ENCODE measurements at regions of chr17 and their contacts with region 1.

Region 1: DNA sequence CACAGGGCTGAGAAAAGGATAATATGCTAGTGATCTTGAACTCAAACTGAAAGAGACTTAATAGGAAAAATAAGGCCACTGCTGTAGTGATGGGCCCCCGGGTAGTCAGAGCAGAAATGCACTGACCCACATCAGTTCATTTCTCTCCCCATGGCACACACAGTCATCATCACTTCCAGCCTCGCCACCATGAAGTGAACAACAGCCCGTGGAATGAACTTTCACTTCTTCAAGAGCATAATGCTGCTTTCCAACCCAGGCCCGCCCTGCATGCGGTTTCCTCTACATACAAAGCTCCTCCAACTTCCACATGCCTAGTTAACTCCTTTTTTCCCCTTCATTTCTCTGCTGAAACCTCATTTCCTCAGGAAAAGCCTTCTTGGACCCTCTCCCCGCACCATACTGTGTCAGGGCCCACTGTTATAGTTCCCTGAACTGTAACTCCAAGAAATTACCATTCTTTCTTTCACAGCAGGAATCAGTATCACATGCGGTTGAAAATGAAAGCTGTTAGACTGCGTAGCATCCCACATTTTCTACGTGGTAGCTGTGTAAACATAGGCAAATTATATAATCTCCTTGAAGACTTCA is 65.8 kb upstream of the SMIM36 start:
- DNase-seq: peak; percentile 80
- H3K4me3 Mint-ChIP-seq: no peak overlapping the region
- H3K27ac Mint-ChIP-seq: no peak overlapping the region
- H3K4me1 Mint-ChIP-seq: peaks cover 31% of the 10 kb centered on the region
- H3K27me3 Mint-ChIP-seq: no peaks in the 10 kb centered on the region

Region 2: GRCh38 chr17:55341432-55341831 is 235.7 kb before region 1 on chr17:
- CTCF ChIA-PET with region 1: no interaction called
- POLR2A ChIA-PET with region 1: no interaction called
- intact Hi-C with region 1: loop called (anchors 1 kb)
- DNase-seq: peak; percentile 30
- H3K4me3 Mint-ChIP-seq: no peak overlapping the region
- H3K27ac Mint-ChIP-seq: no peak overlapping the region
- H3K4me1 Mint-ChIP-seq: peaks cover 46% of the 10 kb centered on the region
- H3K27me3 Mint-ChIP-seq: peaks cover 25% of the 10 kb centered on the region

Region 3: GRCh38 chr17:55437159-55437605 is 139.9 kb before region 1 on chr17:
- CTCF ChIA-PET with region 1: no interaction called
- POLR2A ChIA-PET with region 1: no interaction called
- intact Hi-C with region 1: loop called (anchors 5 kb)
- DNase-seq: no peak
- H3K4me3 Mint-ChIP-seq: no peak overlapping the region
- H3K27ac Mint-ChIP-seq: no peak overlapping the region
- H3K4me1 Mint-ChIP-seq: peaks cover 44% of the 10 kb centered on the region
- H3K27me3 Mint-ChIP-seq: peaks cover 24% of the 10 kb centered on the region

Region 4: DNA sequence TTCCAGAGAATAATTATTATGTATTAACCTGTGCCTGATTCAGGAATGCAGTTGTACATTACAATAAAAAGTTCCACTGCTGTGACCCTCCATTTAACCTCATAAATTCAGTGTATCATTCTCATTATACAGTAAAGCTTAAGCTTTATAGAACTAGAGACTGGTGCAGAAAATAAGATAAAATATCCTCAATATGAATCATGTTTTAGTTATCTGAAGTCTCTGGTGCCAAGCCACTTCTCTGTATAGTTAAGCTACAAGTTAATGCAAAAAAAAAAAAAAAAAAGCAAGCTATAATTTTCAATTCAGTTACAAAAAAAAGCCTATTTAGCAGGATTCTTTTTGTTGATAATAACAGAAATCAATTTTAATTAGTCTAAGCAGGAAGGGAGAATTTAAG is 43.5 kb before region 1 on chr17:
- CTCF ChIA-PET with region 1: no interaction called
- POLR2A ChIA-PET with region 1: no interaction called
- intact Hi-C with region 1: no loop called
- DNase-seq: no peak
- H3K4me3 Mint-ChIP-seq: no peak overlapping the region
- H3K27ac Mint-ChIP-seq: no peak overlapping the region
- H3K4me1 Mint-ChIP-seq: no peaks in the 10 kb centered on the region
- H3K27me3 Mint-ChIP-seq: peaks cover 4% of the 10 kb centered on the region

Region 5: GRCh38 chr17:55549140-55549539 is 28.0 kb before region 1 on chr17:
- CTCF ChIA-PET with region 1: interaction called, 3 read pairs
- POLR2A ChIA-PET with region 1: interaction called, 4 read pairs
- intact Hi-C with region 1: loop called (anchors 1 kb)
- DNase-seq: no peak
- H3K4me3 Mint-ChIP-seq: no peak overlapping the region
- H3K27ac Mint-ChIP-seq: no peak overlapping the region
- H3K4me1 Mint-ChIP-seq: peaks cover 24% of the 10 kb centered on the region
- H3K27me3 Mint-ChIP-seq: peaks cover 2% of the 10 kb centered on the region

Region 6: DNA sequence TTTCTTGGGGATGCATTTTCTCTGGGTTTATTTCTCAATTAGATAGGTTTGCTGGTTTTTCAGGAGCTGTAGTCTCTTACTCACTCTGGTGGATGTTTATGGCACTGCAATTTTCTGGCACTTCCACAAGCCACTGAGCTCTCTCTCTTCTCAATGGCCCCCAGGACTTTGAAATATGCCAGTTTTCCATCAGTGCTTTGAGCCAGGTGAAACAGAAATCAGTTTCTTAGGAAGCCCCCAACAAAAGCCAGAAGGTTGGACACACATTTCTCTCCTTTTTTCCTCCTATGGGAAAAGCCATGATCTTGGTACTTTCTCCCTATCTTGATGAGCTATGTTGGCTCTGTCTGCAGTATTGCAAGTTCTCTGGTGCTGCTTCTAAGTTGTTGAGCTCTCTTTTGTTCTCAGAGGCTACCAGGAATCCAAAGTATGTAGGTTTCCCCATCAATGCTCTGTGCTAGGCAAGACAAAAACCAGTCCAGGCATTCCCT is 24.8 kb after region 1 on chr17:
- CTCF ChIA-PET with region 1: interaction called, 14 read pairs
- POLR2A ChIA-PET with region 1: no interaction called
- intact Hi-C with region 1: no loop called
- DNase-seq: peak; percentile 18
- H3K4me3 Mint-ChIP-seq: no peak overlapping the region
- H3K27ac Mint-ChIP-seq: no peak overlapping the region
- H3K4me1 Mint-ChIP-seq: no peaks in the 10 kb centered on the region
- H3K27me3 Mint-ChIP-seq: peaks cover 12% of the 10 kb centered on the region

Region 7: GRCh38 chr17:55735731-55736405 is 158.8 kb after region 1 on chr17:
- CTCF ChIA-PET with region 1: interaction called, 4 read pairs
- POLR2A ChIA-PET with region 1: interaction called, 4 read pairs
- intact Hi-C with region 1: loop called (anchors 1 kb)
- DNase-seq: peak; percentile 40
- H3K4me3 Mint-ChIP-seq: no peak overlapping the region
- H3K27ac Mint-ChIP-seq: peak overlapping the region; percentile 10
- H3K4me1 Mint-ChIP-seq: peaks cover 24% of the 10 kb centered on the region
- H3K27me3 Mint-ChIP-seq: peaks cover 41% of the 10 kb centered on the region

Region 8: DNA sequence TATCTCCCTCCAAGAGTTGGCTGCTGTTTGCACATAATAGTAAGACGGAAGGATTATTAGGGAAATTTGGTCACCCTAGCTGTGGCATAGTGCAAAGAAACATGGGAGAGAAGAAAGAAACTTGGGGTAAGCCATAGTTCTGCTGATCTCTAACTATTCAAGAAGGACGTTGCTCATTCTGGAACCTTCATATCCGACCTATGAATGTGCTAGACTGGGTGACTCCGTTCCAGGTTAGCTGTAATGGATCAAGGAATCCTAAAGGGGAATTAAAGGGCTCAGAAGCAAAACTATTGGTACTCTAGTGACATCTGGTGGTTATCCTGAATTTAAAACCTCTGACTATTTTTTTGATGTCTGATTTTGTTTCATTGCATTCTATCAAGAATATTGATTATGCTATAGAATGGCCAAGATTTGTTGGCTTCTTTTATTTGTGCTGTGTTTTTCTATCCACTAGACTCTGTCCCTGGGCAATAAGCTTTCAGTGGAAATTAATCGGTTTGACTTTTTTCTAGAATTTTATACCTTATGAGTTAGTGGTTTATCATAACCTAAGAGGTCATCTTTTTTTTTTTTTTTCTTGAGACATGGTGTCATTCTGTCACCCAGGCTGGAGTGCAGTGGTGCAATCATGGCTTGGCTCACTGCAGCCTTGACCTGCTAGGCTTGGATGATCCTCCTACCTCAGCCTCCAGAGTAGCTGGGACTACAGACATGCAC is 193.2 kb after region 1 on chr17:
- CTCF ChIA-PET with region 1: no interaction called
- POLR2A ChIA-PET with region 1: no interaction called
- intact Hi-C with region 1: no loop called
- DNase-seq: no peak
- H3K4me3 Mint-ChIP-seq: no peak overlapping the region
- H3K27ac Mint-ChIP-seq: no peak overlapping the region
- H3K4me1 Mint-ChIP-seq: no peaks in the 10 kb centered on the region
- H3K27me3 Mint-ChIP-seq: no peaks in the 10 kb centered on the region

Region 9: GRCh38 chr17:55806745-55807495 is 229.8 kb after region 1 on chr17:
- CTCF ChIA-PET with region 1: no interaction called
- POLR2A ChIA-PET with region 1: no interaction called
- intact Hi-C with region 1: loop called (anchors 2 kb)
- DNase-seq: peak; percentile 18
- H3K4me3 Mint-ChIP-seq: no peak overlapping the region
- H3K27ac Mint-ChIP-seq: peak overlapping the region; percentile 45
- H3K4me1 Mint-ChIP-seq: peaks cover 9% of the 10 kb centered on the region
- H3K27me3 Mint-ChIP-seq: peaks cover 1% of the 10 kb centered on the region